AG04449 (cell line): ENCODE measurements at regions of chr11 and their contacts with region 1.

Region 1: GRCh38 chr11:6315811-6316425 is 4.4 kb downstream of the CAVIN3 start:
- DNase-seq: no peak
- H3K4me3 ChIP-seq: no peak overlapping the region
- CTCF ChIP-seq: peak; percentile 89

Region 2: GRCh38 chr11:5983443-5983842 is 332.5 kb before region 1 on chr11:
- CTCF ChIA-PET with region 1: no interaction called
- POLR2A ChIA-PET with region 1: no interaction called
- DNase-seq: no peak
- H3K4me3 ChIP-seq: no peak overlapping the region
- CTCF ChIP-seq: no peak

Region 3: DNA sequence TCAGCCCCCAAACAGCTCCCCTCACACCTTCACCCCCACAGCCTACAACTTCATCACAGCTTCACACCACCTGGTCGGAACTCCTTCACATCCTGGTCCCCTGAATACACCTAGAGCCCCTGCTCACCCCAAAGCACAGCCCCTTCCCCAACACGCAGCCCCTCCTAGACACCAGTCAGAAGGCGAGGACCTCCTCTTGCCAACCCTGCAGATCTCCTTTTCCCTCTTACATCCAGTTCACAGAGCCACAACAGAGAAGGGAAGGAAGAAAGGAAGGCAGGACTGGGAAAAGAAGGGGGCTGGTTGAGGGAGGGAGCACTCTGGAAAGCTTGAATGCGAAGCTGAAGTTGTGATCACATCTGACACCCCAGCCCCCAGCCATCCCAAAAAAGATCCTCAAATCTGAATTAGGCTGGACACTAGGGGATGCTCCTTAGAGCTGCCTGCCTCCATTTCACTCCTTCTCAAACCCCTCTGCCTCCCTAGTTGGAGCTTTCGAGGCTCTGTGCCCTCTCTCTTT is 55.7 kb before region 1 on chr11:
- CTCF ChIA-PET with region 1: interaction called, 15 read pairs
- POLR2A ChIA-PET with region 1: no interaction called
- DNase-seq: no peak
- H3K4me3 ChIP-seq: no peak overlapping the region
- CTCF ChIP-seq: no peak

Region 4: DNA sequence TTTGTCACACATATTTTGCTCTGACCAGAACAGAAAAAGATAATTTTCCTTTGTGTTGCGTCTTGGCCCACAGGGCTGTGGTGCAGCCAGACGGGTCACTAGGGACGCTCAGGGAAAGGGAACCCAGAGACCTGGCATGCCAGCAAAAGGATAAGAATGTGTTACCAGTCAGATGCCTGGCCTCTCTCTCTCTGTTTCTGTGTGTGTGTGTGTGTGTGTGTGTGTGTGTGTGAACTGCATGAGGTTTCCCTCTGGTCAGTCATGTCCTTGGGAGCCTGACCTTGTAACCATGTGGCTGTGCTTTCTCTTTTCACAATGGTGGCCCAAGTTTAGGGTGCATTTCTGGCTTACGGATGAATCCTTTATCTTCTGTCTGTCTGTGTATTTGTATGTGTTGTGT is 30.9 kb before region 1 on chr11:
- CTCF ChIA-PET with region 1: interaction called, 16 read pairs
- POLR2A ChIA-PET with region 1: interaction called, 3 read pairs
- DNase-seq: no peak
- H3K4me3 ChIP-seq: no peak overlapping the region
- CTCF ChIP-seq: no peak

Region 5: DNA sequence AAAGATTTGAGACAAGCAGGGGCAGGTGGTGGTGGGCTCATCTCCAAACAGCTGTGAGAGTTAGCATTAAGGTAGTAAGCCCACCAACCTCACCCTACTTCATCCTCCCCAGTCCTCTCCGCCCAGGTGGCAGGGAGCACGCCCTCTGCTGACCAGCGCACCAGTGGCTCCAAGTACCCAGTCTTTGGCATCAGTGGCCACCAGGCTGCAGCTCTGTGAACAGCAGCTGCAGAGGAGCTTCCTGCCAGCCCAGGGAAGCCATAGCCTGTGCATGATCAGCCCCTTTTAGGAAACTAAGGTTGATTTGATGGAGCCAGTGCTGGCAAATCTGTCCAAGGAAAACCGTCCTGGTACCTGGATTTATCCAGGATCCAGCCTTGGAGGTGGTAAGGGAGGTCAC is 17.3 kb before region 1 on chr11:
- CTCF ChIA-PET with region 1: interaction called, 134 read pairs
- POLR2A ChIA-PET with region 1: interaction called, 5 read pairs
- DNase-seq: no peak
- H3K4me3 ChIP-seq: no peak overlapping the region
- CTCF ChIP-seq: peak; percentile 81

Region 6: DNA sequence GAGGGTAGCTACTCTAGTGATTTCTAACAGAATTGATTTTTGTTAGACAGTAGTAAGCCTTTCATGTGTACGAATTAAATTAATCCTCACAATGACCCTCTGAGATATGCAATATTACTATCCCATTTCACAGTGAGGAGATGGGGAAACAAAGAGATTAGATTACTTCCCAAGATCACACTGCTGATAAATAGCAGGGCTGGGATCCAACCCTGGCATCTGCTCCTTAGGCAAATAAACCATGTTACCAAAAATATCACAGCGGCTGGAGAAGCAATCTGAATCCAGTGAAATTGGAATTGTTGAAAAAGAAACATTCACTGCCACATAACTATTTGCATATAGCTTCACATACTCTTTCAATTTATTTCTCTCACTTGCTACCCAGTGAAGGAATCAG is 17.2 kb after region 1 on chr11:
- CTCF ChIA-PET with region 1: interaction called, 22 read pairs
- POLR2A ChIA-PET with region 1: interaction called, 4 read pairs
- DNase-seq: no peak
- H3K4me3 ChIP-seq: no peak overlapping the region
- CTCF ChIP-seq: no peak

Region 7: DNA sequence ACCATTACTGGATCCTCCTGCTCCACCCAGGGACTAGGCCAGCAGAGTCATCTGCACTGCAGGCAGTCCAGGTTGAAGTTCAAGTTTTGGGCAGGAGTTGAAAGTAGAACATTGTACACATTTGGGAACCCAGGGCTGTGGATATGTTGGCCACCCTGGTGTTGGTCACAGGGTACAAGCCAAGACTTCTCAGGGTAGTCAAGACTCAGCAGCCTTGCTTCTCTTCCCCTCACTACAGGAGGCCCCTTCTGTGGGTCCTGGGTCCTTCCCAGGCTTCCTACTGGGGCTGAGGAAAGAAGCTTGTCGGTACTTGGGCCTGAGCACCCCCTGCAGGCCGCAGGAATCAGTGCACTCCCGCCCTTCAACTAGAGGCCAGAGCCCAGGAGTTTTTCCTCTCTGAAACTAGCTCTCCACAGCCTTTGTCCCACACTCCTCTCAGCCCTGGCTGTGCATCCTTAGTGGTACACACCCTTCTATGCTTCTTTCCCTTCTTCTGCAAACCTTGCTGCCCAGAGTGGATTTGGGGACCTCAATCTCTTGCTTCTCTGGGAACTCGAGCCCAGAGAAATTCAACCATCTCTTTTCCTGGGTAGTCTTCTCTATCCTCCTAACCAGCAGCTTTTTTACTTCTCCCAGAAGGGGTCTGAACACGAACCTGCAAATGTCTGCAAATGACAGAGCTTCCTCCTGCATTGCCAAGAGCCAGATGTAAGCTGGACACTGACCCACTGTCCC is 127.5 kb after region 1 on chr11:
- CTCF ChIA-PET with region 1: no interaction called
- POLR2A ChIA-PET with region 1: no interaction called
- DNase-seq: no peak
- H3K4me3 ChIP-seq: no peak overlapping the region
- CTCF ChIP-seq: peak; percentile 91